T-cell (primary cell): ENCODE measurements at regions of chr3 and their contacts with region 1.

Region 1: DNA sequence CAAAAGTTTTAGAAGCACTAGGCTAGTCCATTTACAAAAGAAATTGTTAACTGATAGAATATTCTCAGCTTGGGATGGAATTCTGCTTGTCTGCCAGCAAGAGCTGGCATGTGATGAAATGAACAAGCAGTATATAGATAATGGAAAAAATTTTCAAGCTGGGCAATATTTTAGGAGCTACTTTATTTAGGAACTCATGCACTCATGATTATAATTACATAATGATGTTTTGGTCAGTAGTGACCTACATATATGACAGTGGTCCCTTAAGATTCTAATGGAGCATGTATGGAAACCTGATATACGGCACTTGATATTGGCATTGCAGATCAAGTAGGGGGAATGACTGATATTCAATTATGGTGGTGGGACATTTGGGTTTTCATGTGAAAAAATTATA is 6.1 kb downstream of the EAF1 start:
- DNase-seq: no peak
- ATAC-seq: no peak
- H3K4me3 ChIP-seq: no peak overlapping the region
- H3K4me3 Mint-ChIP-seq: no peak overlapping the region
- H3K27ac ChIP-seq: no peak overlapping the region
- H3K27ac Mint-ChIP-seq: peak overlapping the region in 1 of 2 donors; percentile 6
- H3K4me1 ChIP-seq: peaks cover 12 to 16% of the 10 kb centered on the region in 2 experiments
- H3K4me1 Mint-ChIP-seq: peaks cover 31 to 43% (median 40%) of the 10 kb centered on the region in 3 donors
- H3K27me3 ChIP-seq: no peaks in the 10 kb centered on the region
- H3K27me3 Mint-ChIP-seq: no peaks in the 10 kb centered on the region

Region 2: DNA sequence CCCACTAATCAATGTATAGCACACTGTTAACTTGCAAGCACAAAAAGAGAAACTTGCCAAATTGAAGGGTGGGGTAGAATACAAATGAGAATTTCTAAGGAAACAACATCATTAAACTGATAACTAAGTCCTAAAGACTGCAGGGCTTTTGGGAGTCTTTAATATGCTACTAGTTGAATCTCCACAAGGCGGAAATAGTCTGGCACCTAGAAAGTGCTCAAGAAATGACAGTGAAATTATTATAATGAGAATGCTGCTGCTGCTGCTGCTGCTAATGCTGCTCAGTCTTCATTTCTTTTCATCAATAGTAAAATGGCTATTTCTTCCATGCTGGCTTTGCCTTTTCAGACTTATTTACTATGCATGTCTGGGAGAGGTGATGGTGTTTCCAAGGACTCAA is 259.8 kb after region 1 on chr3:
- CTCF ChIA-PET with region 1: interaction called in 1 of 2 experiments, 11 read pairs
- POLR2A ChIA-PET with region 1: no interaction called
- DNase-seq: peak in 1 of 35 experiments; percentile 7
- ATAC-seq: no peak
- H3K4me3 ChIP-seq: no peak overlapping the region
- H3K4me3 Mint-ChIP-seq: no peak overlapping the region
- H3K27ac ChIP-seq: no peak overlapping the region
- H3K27ac Mint-ChIP-seq: no peak overlapping the region
- H3K4me1 ChIP-seq: no peaks in the 10 kb centered on the region
- H3K4me1 Mint-ChIP-seq: peaks cover 0 to 6% (median 3%) of the 10 kb centered on the region in 3 donors
- H3K27me3 ChIP-seq: no peaks in the 10 kb centered on the region
- H3K27me3 Mint-ChIP-seq: no peaks in the 10 kb centered on the region